Left ventricle myocardium inferior (tissue), 1 donor: ENCODE measurements at regions of chr2 and their contacts with region 1.

Region 1: DNA sequence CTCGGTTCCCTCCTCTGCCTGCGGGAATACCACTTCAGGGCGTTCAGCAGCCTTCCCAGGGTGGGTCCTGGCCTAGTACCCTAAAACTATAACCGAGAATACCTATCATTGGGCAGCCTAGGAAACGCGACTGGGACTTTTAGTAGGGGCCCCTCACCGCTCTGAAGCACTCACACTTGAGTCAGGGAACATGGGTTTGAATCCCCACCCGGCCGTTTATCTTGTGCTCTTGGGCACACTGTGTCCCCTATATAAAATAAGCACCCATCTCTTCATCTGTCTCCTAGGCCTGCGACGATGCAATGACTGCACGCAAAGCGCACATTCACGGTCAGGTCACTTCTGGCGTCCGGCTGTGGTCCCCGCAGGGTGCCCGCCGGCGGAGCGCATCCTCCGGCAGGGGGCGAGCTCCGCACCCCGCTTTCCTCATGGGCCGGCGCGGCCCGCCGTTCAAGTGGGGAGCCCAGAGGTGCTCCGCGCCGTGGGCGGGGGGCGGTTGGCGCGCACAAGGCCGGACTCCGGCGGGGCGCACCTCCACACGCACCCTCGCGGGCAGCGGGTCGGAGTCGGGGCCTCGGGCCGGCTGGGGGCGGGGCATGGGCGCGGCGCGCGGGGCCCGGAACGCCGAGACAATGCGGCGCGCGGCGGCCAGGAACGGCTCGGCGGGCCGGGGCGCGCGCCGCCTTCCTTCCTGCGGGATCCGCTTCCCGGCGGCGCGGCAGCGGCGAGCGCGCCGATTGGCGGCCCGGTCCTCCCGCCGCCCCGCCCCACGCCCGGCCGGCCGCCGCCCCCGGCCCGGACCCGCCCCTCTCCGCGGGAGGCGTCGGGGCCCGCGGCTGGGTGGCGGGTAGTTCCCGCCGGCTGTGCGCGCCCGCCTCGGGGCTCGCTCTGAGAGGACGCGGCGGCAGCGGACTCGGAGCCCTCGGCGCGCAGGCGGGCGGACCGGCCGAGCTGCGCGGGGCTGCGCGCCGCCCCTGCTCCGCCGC is at the start of gene ASAP2:
- DNase-seq: peak; percentile 73
- H3K4me3 ChIP-seq: peak within 1 kb of the TSS; percentile 93
- H3K27ac ChIP-seq: peak within 1 kb of the TSS; percentile 92
- H3K4me1 ChIP-seq: peaks cover 48% of the 10 kb centered on the region
- H3K27me3 ChIP-seq: no peaks in the 10 kb centered on the region
- CTCF ChIP-seq: peak; percentile 90
- total RNA-seq, gene ASAP2: 10.0 TPM

Region 2: DNA sequence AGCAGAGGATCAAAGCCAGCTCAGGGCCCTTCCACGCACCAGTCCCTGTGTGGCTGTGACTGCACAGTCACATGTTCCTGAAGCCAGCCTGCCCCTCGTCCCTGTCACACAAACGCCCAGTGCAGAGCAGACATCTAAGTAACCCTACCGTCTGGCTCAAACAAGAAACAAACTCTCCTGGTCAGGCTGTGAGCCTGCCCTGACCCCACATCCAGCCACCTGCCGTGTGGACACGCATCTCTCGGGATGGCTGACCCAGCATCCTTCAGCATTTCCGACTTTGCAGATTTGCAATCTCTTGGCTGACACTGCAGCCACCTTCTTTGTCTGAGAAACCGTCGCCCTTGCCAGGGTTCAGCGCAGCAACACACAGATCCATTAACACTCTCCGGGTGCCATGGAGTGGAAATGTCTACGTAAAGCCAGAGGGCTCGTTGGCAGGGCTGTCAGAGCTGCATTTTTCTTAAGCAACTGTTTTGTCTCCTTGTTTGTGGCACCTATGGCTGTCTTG is 82.0 kb before region 1 on chr2:
- intact Hi-C with region 1: no loop called
- DNase-seq: no peak
- H3K4me3 ChIP-seq: no peak overlapping the region
- H3K27ac ChIP-seq: no peak overlapping the region
- H3K4me1 ChIP-seq: no peaks in the 10 kb centered on the region
- H3K27me3 ChIP-seq: no peaks in the 10 kb centered on the region
- CTCF ChIP-seq: no peak

Region 3: GRCh38 chr2:9333591-9334171 is 127.4 kb after region 1 on chr2:
- intact Hi-C with region 1: loop called (anchors 5 kb)
- DNase-seq: peak; percentile 29
- H3K4me3 ChIP-seq: no peak overlapping the region
- H3K27ac ChIP-seq: peak overlapping the region; percentile 37
- H3K4me1 ChIP-seq: peaks cover 54% of the 10 kb centered on the region
- H3K27me3 ChIP-seq: no peaks in the 10 kb centered on the region
- CTCF ChIP-seq: peak; percentile 80

Region 4: GRCh38 chr2:9364791-9365497 is 158.7 kb after region 1 on chr2:
- intact Hi-C with region 1: no loop called
- DNase-seq: no peak
- H3K4me3 ChIP-seq: no peak overlapping the region
- H3K27ac ChIP-seq: no peak overlapping the region
- H3K4me1 ChIP-seq: peaks cover 15% of the 10 kb centered on the region
- H3K27me3 ChIP-seq: no peaks in the 10 kb centered on the region
- CTCF ChIP-seq: no peak